Head of caudate nucleus (tissue), 42 donors: ENCODE measurements at regions of chr9 and their contacts with region 1.

Region 1: GRCh38 chr9:134325817-134326723 is at the start of gene RXRA:
- DNase-seq: peak in 40 of 42 donors; percentile 56 to 89 (median 76)

Region 2: GRCh38 chr9:134171316-134172197 is 154.5 kb before region 1 on chr9:
- intact Hi-C with region 1: loop called (anchors 5 kb)
- DNase-seq: no peak

Region 3: GRCh38 chr9:134434894-134435506 is 108.9 kb after region 1 on chr9:
- intact Hi-C with region 1: loop called (anchors 5 kb)
- DNase-seq: peak; percentile 81 to 97 (median 92)